Colonic mucosa (tissue), 4 donors: ENCODE measurements at regions of chr3 and their contacts with region 1.

Region 1: GRCh38 chr3:115692887-115693524 is 69.7 kb downstream of the GAP43 start:
- DNase-seq: peak; percentile 75
- H3K4me3 ChIP-seq: no peak overlapping the region
- H3K27ac ChIP-seq: no peak overlapping the region
- H3K4me1 ChIP-seq: no peaks in the 10 kb centered on the region
- H3K27me3 ChIP-seq: no peaks in the 10 kb centered on the region
- CTCF ChIP-seq: peak; percentile 64

Region 2: DNA sequence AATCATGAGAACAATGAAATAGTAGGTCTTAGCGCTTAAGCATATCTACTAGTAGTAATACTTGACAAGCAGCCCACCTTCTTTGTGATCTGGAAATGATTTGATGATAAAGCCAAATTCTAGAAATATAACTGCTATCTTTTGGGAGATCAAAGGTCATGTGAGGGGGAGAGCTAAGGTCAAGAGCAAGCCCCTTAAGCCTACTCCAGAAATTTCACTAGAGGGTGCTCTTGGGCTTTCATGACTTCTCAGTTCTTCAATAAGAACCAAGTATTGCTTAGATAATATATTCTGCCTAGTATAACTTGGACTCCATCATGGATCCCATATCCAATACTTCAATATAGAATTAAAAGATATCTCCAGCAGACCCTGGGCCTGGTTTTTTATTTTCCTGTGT is 865.5 kb before region 1 on chr3:
- intact Hi-C with region 1: loop called (anchors 10 kb)
- DNase-seq: no peak
- H3K4me3 ChIP-seq: no peak overlapping the region
- H3K27ac ChIP-seq: no peak overlapping the region
- H3K4me1 ChIP-seq: no peaks in the 10 kb centered on the region
- H3K27me3 ChIP-seq: no peaks in the 10 kb centered on the region
- CTCF ChIP-seq: peak; percentile 64

Region 3: GRCh38 chr3:115092220-115092791 is 600.7 kb before region 1 on chr3:
- intact Hi-C with region 1: loop called (anchors 5 kb)
- DNase-seq: peak; percentile 52
- H3K4me3 ChIP-seq: no peak overlapping the region
- H3K27ac ChIP-seq: no peak overlapping the region
- H3K4me1 ChIP-seq: no peaks in the 10 kb centered on the region
- H3K27me3 ChIP-seq: no peaks in the 10 kb centered on the region
- CTCF ChIP-seq: no peak

Region 4: GRCh38 chr3:115217678-115218451 is 475.1 kb before region 1 on chr3:
- intact Hi-C with region 1: loop called (anchors 5 kb)
- DNase-seq: peak; percentile 56
- H3K4me3 ChIP-seq: no peak overlapping the region
- H3K27ac ChIP-seq: peak overlapping the region; percentile 37
- H3K4me1 ChIP-seq: no peaks in the 10 kb centered on the region
- H3K27me3 ChIP-seq: no peaks in the 10 kb centered on the region
- CTCF ChIP-seq: peak; percentile 41

Region 5: GRCh38 chr3:115623044-115623868 is 69.8 kb before region 1 on chr3 and contains the start of gene GAP43:
- intact Hi-C with region 1: no loop called
- DNase-seq: no peak
- H3K4me3 ChIP-seq: no peak within 1 kb of the TSS
- H3K27ac ChIP-seq: no peak within 1 kb of the TSS
- H3K4me1 ChIP-seq: no peaks in the 10 kb centered on the region
- H3K27me3 ChIP-seq: no peaks in the 10 kb centered on the region
- CTCF ChIP-seq: no peak
- total RNA-seq, gene GAP43: 0.54 to 1.8 TPM